Naive thymus-derived CD4-positive, alpha-beta T cell (primary cell): ENCODE measurements at regions of chr3 and their contacts with region 1.

Region 1: DNA sequence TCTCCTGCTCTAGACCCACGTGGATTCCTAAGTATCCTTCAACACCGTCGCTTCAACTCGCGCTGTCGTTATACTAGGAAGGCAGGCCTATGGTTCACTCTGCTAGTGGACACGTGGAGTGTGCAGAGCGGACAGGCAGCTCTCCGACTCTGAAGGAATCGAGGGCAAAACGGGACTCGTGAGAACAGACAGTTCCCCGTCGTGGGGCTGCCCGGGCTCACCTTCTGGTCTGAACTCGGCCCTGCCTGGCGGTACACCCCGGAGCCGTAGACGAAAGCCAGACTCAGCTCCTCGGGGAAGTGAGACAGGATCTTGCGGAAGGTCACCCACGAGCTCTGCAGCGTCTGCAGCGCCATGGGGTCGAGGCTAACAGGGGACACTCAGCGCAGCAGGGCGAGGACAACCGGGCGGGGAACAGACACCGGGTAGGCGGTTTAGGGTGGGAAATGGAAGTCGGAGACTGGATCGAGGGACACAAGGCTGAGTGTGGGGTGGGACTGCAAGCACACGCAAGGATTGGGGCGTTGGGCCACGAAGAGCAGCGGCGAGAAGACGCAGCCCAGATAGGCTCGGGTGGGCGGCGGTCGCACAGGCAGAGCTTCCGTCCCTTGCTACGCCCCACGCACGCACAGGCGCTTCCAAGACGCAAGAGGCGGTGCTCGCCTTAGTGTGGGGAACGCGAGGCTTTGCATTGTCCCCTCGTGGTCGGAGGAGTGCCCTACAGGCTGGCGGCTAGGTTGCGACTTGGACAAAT is at the start of gene TAMM41:
- DNase-seq: peak; percentile 68 to 88 (median 85)
- ATAC-seq: peak; percentile 100
- H3K4me3 ChIP-seq: peak within 1 kb of the TSS; percentile 92
- H3K4me3 Mint-ChIP-seq: peak within 1 kb of the TSS; percentile 93 to 99 (median 98)
- H3K27ac ChIP-seq: peak within 1 kb of the TSS; percentile 90
- H3K27ac Mint-ChIP-seq: peak within 1 kb of the TSS; percentile 90 to 98 (median 96)
- H3K4me1 ChIP-seq: peaks cover 23 to 31% of the 10 kb centered on the region in 2 donors
- H3K4me1 Mint-ChIP-seq: peaks cover 21 to 62% (median 54%) of the 10 kb centered on the region in 7 donors
- H3K27me3 ChIP-seq: no peaks in the 10 kb centered on the region
- H3K27me3 Mint-ChIP-seq: peaks cover 0 to 12% (median 0%) of the 10 kb centered on the region in 5 donors
- total RNA-seq, gene TAMM41: 24.4 to 58.0 (median 28.6) TPM

Region 2: DNA sequence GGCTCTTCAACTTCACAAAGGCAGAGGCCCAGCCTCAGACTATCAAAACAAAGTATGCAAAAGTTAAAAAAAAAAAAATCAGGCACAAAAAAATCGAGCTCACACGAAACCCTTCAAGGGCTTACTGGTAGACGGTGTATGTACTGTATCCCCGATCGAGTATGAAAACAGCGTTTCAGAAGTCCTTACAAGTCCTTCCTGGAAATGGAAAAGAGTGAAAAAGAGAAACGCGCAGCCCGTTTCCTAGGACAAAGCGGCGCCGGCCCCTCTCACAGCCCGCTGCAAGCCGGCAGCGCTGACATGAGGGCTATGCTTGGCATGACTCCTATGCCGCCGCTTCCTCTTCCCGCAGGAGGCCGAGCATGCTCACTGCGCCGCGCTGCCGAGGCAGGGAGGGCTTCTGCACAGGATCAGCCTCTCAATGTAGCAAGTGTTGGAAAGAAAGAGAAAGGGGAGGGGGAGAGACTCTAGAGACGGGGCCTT is 202.8 kb before region 1 on chr3 and contains the start of gene VGLL4:
- CTCF ChIA-PET with region 1: no interaction called
- POLR2A ChIA-PET with region 1: interaction called, 4 read pairs
- intact Hi-C with region 1: loop called (anchors 1 kb)
- DNase-seq: peak; percentile 42 to 71 (median 58)
- ATAC-seq: peak; percentile 72
- H3K4me3 ChIP-seq: peak within 1 kb of the TSS; percentile 98
- H3K4me3 Mint-ChIP-seq: peak within 1 kb of the TSS; percentile 90 to 100 (median 98)
- H3K27ac ChIP-seq: peak within 1 kb of the TSS; percentile 91
- H3K27ac Mint-ChIP-seq: peak within 1 kb of the TSS; percentile 94 to 100 (median 99)
- H3K4me1 ChIP-seq: peaks cover 12 to 23% of the 10 kb centered on the region in 2 donors
- H3K4me1 Mint-ChIP-seq: peaks cover 22 to 43% (median 37%) of the 10 kb centered on the region in 7 donors
- H3K27me3 ChIP-seq: no peaks in the 10 kb centered on the region
- H3K27me3 Mint-ChIP-seq: peaks cover 0 to 17% (median 0%) of the 10 kb centered on the region in 5 donors
- total RNA-seq, gene VGLL4: 22.9 to 44.8 (median 36.2) TPM

Region 3: DNA sequence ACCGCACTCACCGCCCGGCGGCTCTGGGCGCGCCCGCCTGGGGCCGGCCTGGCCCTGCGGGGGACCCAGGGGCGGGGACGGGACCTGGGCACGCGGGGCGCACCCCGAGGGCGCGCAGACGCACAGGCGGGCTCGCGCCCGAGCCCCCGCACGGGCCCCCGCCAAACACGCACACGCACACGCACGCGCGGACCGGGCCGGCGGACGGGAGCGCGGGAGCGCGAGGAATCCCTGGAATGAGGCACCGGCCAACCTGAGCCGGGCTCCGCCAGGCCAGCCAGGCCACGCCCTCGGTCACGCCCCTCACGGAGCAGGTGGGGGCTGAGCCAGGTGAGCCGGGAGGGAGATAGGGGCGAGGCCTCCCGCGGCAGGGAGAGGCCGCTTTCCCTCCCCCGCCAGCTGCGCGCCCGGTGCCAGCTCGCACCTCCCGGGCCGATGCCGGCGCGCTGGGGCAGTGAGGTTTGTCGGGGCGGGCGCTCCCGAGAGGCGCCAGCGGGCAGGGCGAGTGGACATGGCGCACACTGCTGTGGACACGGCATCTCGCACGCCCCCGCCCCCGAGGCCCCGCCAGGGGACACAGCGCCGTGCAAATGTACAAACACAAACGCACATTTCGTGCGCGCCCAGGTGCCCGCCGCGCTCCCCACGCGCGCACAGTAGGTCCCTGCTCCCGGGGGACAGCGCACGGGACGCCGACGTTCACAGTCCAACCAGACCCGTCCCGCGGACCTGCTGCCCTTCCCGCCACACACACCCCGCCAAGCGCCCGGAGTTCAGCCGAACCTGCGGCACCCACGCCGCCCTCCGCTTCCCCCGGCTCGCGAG is 126.8 kb before region 1 on chr3:
- CTCF ChIA-PET with region 1: no interaction called
- POLR2A ChIA-PET with region 1: interaction called, 4 read pairs
- intact Hi-C with region 1: loop called (anchors 1 to 2 kb)
- DNase-seq: peak; percentile 58 to 77 (median 67)
- ATAC-seq: peak; percentile 86
- H3K4me3 ChIP-seq: peak overlapping the region; percentile 74
- H3K4me3 Mint-ChIP-seq: peak overlapping the region; percentile 59 to 95 (median 82)
- H3K27ac ChIP-seq: peak overlapping the region; percentile 75
- H3K27ac Mint-ChIP-seq: peak overlapping the region in 1 of 9 donors; percentile 62
- H3K4me1 ChIP-seq: peaks cover 6 to 8% of the 10 kb centered on the region in 2 donors
- H3K4me1 Mint-ChIP-seq: peaks cover 14 to 30% (median 20%) of the 10 kb centered on the region in 7 donors
- H3K27me3 ChIP-seq: no peaks in the 10 kb centered on the region
- H3K27me3 Mint-ChIP-seq: peaks cover 2 to 34% (median 10%) of the 10 kb centered on the region in 5 donors

Region 4: DNA sequence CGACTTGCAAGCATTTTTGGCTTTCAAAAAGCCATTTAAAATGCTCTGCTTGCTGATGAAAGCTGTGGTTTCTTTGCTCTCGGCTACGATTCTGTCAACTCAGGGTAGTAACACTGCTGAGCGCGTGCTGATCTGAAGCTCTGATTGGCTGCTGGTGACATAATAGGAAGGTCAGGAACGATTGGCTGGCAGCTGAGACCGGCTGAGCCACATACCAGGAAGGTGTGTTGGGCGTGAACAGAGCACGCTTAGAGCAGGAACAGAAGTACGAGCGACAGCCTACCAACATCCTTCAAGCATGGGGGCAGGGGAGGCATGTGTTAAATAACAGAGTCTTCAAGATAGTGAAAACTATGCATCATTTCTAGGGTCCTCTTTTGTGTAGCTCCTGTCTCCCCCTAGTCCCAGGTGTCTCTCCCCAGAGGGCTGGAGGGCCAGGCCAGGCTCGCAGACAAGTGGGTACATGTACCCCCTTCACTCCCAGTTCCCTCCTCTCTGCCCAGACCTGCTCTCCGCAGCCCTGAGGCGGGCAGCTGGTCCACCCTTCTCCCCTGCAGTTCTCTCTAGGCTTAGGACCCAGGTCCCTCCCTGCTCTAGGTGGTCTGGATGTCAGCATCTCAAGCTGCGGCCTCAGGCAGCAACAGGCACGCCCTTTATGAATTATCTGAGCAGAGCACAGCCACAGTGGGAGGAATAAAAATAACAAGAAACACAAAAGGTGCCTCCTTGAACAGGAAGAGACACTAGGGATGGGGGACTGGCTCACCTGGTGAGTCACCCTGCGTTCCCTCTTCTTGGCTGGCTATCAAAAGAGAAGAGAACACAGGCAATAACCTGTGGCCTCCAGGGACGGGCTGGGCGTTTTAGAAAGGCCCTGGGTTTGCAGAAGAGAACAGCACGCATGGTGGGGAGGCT is 75.7 kb before region 1 on chr3:
- CTCF ChIA-PET with region 1: no interaction called
- POLR2A ChIA-PET with region 1: interaction called, 5 read pairs
- intact Hi-C with region 1: loop called in 1 of 2 experiments (anchors 1 kb)
- DNase-seq: peak; percentile 31 to 91 (median 86)
- ATAC-seq: peak; percentile 100
- H3K4me3 ChIP-seq: peak overlapping the region; percentile 12
- H3K4me3 Mint-ChIP-seq: peak overlapping the region; percentile 22 to 79 (median 62)
- H3K27ac ChIP-seq: peak overlapping the region; percentile 56
- H3K27ac Mint-ChIP-seq: peak overlapping the region; percentile 58 to 90 (median 70)
- H3K4me1 ChIP-seq: peaks cover 15% of the 10 kb centered on the region in 2 donors
- H3K4me1 Mint-ChIP-seq: peaks cover 11 to 30% (median 24%) of the 10 kb centered on the region in 7 donors
- H3K27me3 ChIP-seq: no peaks in the 10 kb centered on the region
- H3K27me3 Mint-ChIP-seq: no peaks in the 10 kb centered on the region

Region 5: GRCh38 chr3:11785024-11785377 is 61.5 kb before region 1 on chr3:
- CTCF ChIA-PET with region 1: interaction called, 3 read pairs
- POLR2A ChIA-PET with region 1: no interaction called
- intact Hi-C with region 1: loop called in 1 of 2 experiments (anchors 2 kb)
- DNase-seq: peak in 6 of 9 donors; percentile 21 to 48 (median 34)
- ATAC-seq: peak; percentile 76
- H3K4me3 ChIP-seq: no peak overlapping the region
- H3K4me3 Mint-ChIP-seq: peak overlapping the region in 8 of 10 donors; percentile 26 to 86 (median 59)
- H3K27ac ChIP-seq: no peak overlapping the region
- H3K27ac Mint-ChIP-seq: peak overlapping the region in 7 of 9 donors; percentile 53 to 99 (median 82)
- H3K4me1 ChIP-seq: peaks cover 3 to 9% of the 10 kb centered on the region in 2 donors
- H3K4me1 Mint-ChIP-seq: peaks cover 10 to 27% (median 22%) of the 10 kb centered on the region in 7 donors
- H3K27me3 ChIP-seq: no peaks in the 10 kb centered on the region
- H3K27me3 Mint-ChIP-seq: no peaks in the 10 kb centered on the region

Region 6: DNA sequence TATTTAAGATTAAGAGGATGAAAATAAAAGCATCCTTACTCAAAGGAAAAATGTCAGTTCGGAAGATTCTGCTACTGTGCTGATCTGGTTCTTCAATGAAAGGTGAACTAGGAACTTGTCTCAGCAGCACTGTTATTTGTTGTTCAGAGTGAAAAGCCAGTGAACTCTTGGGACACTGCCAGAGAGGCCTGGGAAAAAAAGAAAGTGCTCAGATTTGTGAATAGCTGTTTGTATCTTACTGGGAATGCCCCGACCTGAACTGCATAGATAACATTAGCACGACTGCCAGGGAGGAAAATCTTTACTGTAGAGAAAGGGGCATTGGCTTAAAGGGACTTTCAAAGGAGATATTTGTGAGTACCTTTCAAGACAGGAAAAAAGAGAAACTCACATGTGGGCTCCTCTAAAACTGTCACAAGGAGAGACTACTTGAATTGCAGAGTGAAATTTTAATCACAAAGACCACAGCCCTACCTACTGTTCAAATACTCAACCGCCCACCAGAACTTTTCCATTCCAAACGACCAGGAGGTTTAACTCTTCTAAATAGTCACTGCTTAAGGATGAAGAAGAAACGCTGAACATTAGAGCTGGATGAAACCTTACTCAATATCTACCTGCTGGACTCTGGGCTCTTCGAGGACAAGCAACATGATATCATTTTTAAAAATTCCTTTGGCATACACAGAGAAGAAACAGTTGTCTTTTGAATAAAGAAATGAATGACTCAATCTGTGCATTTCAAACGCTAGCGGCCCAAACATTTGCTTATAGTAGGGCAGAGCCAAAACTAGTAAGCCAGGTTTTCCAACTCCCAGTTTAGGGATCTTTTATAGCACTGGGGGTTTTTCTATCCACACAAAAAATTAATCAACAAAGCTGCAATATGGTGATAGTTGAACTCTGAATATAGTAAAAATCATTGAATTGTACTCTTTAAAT is 13.2 kb before region 1 on chr3:
- CTCF ChIA-PET with region 1: interaction called, 4 read pairs
- POLR2A ChIA-PET with region 1: interaction called, 3 read pairs
- intact Hi-C with region 1: loop called in 1 of 2 experiments (anchors 1 kb)
- DNase-seq: no peak
- ATAC-seq: no peak
- H3K4me3 ChIP-seq: no peak overlapping the region
- H3K4me3 Mint-ChIP-seq: no peak overlapping the region
- H3K27ac ChIP-seq: no peak overlapping the region
- H3K27ac Mint-ChIP-seq: peak overlapping the region in 3 of 9 donors; percentile 8 to 41 (median 15)
- H3K4me1 ChIP-seq: no peaks in the 10 kb centered on the region
- H3K4me1 Mint-ChIP-seq: peaks cover 0 to 8% (median 0%) of the 10 kb centered on the region in 7 donors
- H3K27me3 ChIP-seq: no peaks in the 10 kb centered on the region
- H3K27me3 Mint-ChIP-seq: no peaks in the 10 kb centered on the region

Region 7: GRCh38 chr3:12556671-12557472 is 710.4 kb after region 1 on chr3 and contains the start of gene MKRN2:
- CTCF ChIA-PET with region 1: no interaction called
- POLR2A ChIA-PET with region 1: no interaction called
- intact Hi-C with region 1: loop called (anchors 2 kb)
- DNase-seq: peak; percentile 74 to 89 (median 83)
- ATAC-seq: peak; percentile 98
- H3K4me3 ChIP-seq: peak within 1 kb of the TSS; percentile 95
- H3K4me3 Mint-ChIP-seq: peak within 1 kb of the TSS; percentile 90 to 100 (median 96)
- H3K27ac ChIP-seq: peak within 1 kb of the TSS; percentile 94
- H3K27ac Mint-ChIP-seq: peak within 1 kb of the TSS; percentile 87 to 95 (median 93)
- H3K4me1 ChIP-seq: peaks cover 31 to 38% of the 10 kb centered on the region in 2 donors
- H3K4me1 Mint-ChIP-seq: peaks cover 40 to 71% (median 68%) of the 10 kb centered on the region in 7 donors
- H3K27me3 ChIP-seq: peaks cover 6% of the 10 kb centered on the region in 2 donors
- H3K27me3 Mint-ChIP-seq: peaks cover 22 to 37% (median 28%) of the 10 kb centered on the region in 5 donors
- total RNA-seq, gene MKRN2: 21.9 to 34.5 (median 25.4) TPM